WTC11 (cell line): ENCODE measurements at regions of chr3 and their contacts with region 1.

Region 1: GRCh38 chr3:8663177-8664061 is 18.8 kb upstream of the SSUH2 start:
- DNase-seq: peak; percentile 95
- ATAC-seq: peak; percentile 92
- H3K4me3 Mint-ChIP-seq: no peak overlapping the region
- H3K27ac Mint-ChIP-seq: no peak overlapping the region
- H3K4me1 Mint-ChIP-seq: peaks cover 9% of the 10 kb centered on the region
- H3K27me3 Mint-ChIP-seq: peaks cover 52% of the 10 kb centered on the region
- CTCF ChIP-seq: peak; percentile 70

Region 2: GRCh38 chr3:8170971-8171508 is 492.4 kb before region 1 on chr3:
- CTCF ChIA-PET with region 1: no interaction called
- POLR2A ChIA-PET with region 1: no interaction called
- DNase-seq: no peak
- ATAC-seq: no peak
- H3K4me3 Mint-ChIP-seq: no peak overlapping the region
- H3K27ac Mint-ChIP-seq: no peak overlapping the region
- H3K4me1 Mint-ChIP-seq: peaks cover 7% of the 10 kb centered on the region
- H3K27me3 Mint-ChIP-seq: no peaks in the 10 kb centered on the region
- CTCF ChIP-seq: no peak

Region 3: GRCh38 chr3:8724108-8724782 is 60.8 kb after region 1 on chr3:
- CTCF ChIA-PET with region 1: interaction called, 10 read pairs
- POLR2A ChIA-PET with region 1: no interaction called
- DNase-seq: no peak
- ATAC-seq: no peak
- H3K4me3 Mint-ChIP-seq: no peak overlapping the region
- H3K27ac Mint-ChIP-seq: no peak overlapping the region
- H3K4me1 Mint-ChIP-seq: peaks cover 30% of the 10 kb centered on the region
- H3K27me3 Mint-ChIP-seq: peaks cover 66% of the 10 kb centered on the region
- CTCF ChIP-seq: no peak

Region 4: GRCh38 chr3:8800016-8800415 is 136.6 kb after region 1 on chr3:
- CTCF ChIA-PET with region 1: no interaction called
- POLR2A ChIA-PET with region 1: no interaction called
- DNase-seq: no peak
- ATAC-seq: no peak
- H3K4me3 Mint-ChIP-seq: no peak overlapping the region
- H3K27ac Mint-ChIP-seq: no peak overlapping the region
- H3K4me1 Mint-ChIP-seq: no peaks in the 10 kb centered on the region
- H3K27me3 Mint-ChIP-seq: no peaks in the 10 kb centered on the region
- CTCF ChIP-seq: no peak